ENCODE measurements at regions of chr2 and their contacts with region 1.

Region 1: GRCh38 chr2:178414266-178415247 is 36.4 kb downstream of the PRKRA start:
- DNase-seq: peak; percentile 93
- ATAC-seq: peak; percentile 83
- H3K4me3 ChIP-seq: peak overlapping the region; percentile 68 to 79
- H3K27ac ChIP-seq: peak overlapping the region; percentile 73; the same call in 1 of the 2 replicates
- H3K4me1 ChIP-seq: peaks cover 12 to 17% of the 10 kb centered on the region in 2 experiments; a peak in 3 of 4 replicates
- H3K27me3 ChIP-seq: no peaks in the 10 kb centered on the region
- CTCF ChIP-seq: peak; percentile 85 to 89 (median 89)
- POLR2A ChIP-seq: peak; percentile 65
- RAD21 ChIP-seq: peak; percentile 89

Region 2: DNA sequence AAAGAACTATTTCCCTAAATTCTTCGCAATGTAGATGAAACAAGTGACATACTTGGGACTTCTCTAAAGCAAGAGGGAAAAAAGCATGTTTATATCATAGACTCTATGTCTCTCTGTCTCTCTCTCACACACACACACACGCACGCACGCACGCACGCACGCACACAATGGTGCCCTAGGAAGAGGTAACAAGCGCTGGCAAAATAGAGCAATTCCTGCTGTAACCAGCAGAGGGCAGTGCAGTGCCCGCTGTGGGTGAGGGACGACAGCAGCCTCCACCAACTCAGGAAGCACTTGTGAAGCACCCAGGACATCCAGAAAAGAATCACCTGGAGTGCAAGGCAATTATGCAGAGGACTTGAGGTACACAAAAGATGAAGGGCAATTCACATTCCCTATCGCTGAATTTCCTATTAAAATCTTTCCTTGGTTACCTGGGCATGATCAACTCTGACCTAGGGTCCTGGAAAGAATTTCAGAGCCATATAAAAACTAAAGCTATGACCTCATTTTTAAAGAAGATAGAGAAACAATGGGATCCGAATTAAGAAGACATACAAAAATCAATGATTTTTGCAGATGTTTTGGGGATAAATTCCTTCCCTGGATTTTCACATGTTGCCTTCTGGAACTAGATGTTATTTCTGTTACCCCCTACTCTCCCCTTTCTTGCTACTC is 508.4 kb before region 1 on chr2:
- CTCF ChIA-PET with region 1: interaction called, 4 read pairs
- POLR2A ChIA-PET with region 1: no interaction called
- RAD21 ChIA-PET with region 1: no interaction called
- intact Hi-C with region 1: loop called (anchors 10 kb)
- DNase-seq: peak; percentile 63
- ATAC-seq: peak; percentile 99
- H3K4me3 ChIP-seq: no peak overlapping the region
- H3K27ac ChIP-seq: no peak overlapping the region
- H3K4me1 ChIP-seq: peaks cover 0 to 8% of the 10 kb centered on the region in 2 experiments; a peak in 2 of 4 replicates
- H3K27me3 ChIP-seq: no peaks in the 10 kb centered on the region
- CTCF ChIP-seq: peak; percentile 58 to 97 (median 97)
- POLR2A ChIP-seq: no peak
- RAD21 ChIP-seq: peak; percentile 58

Region 3: GRCh38 chr2:178112202-178113152 is 302.1 kb before region 1 on chr2 and contains the start of gene RBM45:
- CTCF ChIA-PET with region 1: interaction called, 25 read pairs
- POLR2A ChIA-PET with region 1: interaction called, 11 read pairs
- RAD21 ChIA-PET with region 1: no interaction called
- intact Hi-C with region 1: loop called (anchors 1 kb)
- DNase-seq: peak; percentile 87
- ATAC-seq: peak; percentile 97
- H3K4me3 ChIP-seq: peak within 1 kb of the TSS; percentile 77 to 97
- H3K27ac ChIP-seq: peak within 1 kb of the TSS; percentile 58
- H3K4me1 ChIP-seq: peaks cover 2 to 11% of the 10 kb centered on the region in 2 experiments; a peak in 1 of 4 replicates
- H3K27me3 ChIP-seq: no peaks in the 10 kb centered on the region
- CTCF ChIP-seq: peak; percentile 83 to 97 (median 93)
- POLR2A ChIP-seq: peak; percentile 79
- RAD21 ChIP-seq: peak; percentile 58
- total RNA-seq, gene RBM45: 7.4 TPM

Region 4: DNA sequence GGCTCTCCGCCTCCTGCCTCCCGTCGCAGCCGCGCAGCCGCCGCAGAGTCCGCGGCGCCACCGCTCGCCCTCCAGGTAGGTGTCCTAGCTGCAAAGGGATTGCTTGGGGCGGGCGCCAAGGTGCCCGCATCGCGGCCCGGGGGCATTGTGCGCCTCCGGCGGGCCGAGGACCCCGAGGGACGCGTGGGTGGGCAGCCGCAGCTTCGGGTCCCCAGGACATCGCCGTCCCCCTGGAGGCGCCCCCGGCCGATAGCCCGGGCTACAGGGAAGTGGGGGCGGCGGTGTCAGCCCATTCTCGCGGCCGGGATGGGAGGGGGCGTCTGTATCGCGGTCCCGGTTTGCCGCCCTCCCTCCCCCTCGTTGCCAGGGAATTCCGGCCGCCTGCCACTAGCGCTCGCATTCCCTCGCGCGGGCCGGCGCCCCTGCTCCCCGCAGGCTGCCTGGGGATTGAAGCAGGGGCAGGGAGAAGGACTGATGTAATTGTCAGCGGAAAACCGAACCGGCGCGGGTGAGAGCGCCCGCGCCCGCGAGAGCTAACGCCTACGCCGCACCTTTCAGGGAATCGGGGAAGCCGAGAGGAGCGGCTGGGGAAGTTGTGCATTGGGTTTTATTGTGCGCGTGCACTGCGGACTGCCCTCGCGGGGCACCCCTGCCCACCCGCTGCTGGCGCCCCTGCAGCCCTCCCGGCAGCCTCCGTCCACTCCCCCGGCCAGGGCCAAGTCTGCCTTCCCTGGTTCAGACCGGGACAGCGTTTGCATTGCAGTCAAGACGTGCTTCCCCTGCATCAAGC is 219.8 kb before region 1 on chr2:
- CTCF ChIA-PET with region 1: no interaction called
- POLR2A ChIA-PET with region 1: interaction called, 4 read pairs
- RAD21 ChIA-PET with region 1: no interaction called
- intact Hi-C with region 1: loop called (anchors 5 kb)
- DNase-seq: no peak
- ATAC-seq: peak; percentile 49
- H3K4me3 ChIP-seq: peak overlapping the region; percentile 69 to 87
- H3K27ac ChIP-seq: peak overlapping the region; percentile 79
- H3K4me1 ChIP-seq: peaks cover 11 to 28% of the 10 kb centered on the region in 2 experiments
- H3K27me3 ChIP-seq: no peaks in the 10 kb centered on the region
- CTCF ChIP-seq: 0 out of 6 replicates have a peak, but pooled peaks of 2 of the 3 experiments have one; percentile 1 to 12
- POLR2A ChIP-seq: no peak
- RAD21 ChIP-seq: no peak

Region 5: DNA sequence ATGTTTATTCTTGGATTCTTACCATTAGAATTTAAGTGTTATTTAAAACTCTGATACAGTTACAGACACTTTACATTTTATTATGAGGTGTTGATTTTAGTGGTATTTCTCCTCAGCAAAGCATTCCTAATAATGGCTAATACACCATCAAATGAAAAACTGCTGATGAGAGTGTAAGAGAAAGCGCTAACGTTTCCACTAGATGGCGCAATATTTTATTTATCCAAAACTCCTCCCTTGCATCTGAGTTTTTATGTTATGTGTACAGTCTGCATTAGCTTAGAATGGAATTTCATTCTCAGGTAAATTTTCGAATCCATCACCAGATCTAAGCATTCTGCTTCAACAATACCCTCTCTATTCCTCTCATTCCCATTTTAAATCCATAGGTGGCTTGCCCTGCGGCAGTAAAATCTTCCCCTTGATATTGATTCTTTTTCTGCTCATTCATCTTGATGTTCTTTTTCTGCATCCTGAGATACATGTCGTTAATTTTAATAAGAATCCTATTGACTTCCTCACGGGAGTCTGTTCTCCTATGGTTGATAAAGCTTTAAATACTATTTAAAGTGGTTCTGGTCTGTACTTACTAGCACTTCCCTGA is 17.5 kb before region 1 on chr2:
- CTCF ChIA-PET with region 1: interaction called, 22 read pairs
- POLR2A ChIA-PET with region 1: interaction called, 4 read pairs
- RAD21 ChIA-PET with region 1: interaction called in 1 of 2 experiments, 3 read pairs
- intact Hi-C with region 1: no loop called
- DNase-seq: peak; percentile 33
- ATAC-seq: peak; percentile 91
- H3K4me3 ChIP-seq: no peak overlapping the region
- H3K27ac ChIP-seq: no peak overlapping the region
- H3K4me1 ChIP-seq: no peaks in the 10 kb centered on the region
- H3K27me3 ChIP-seq: no peaks in the 10 kb centered on the region
- CTCF ChIP-seq: peak; percentile 54 to 77 (median 62); a peak in 5 of 6 replicates
- POLR2A ChIP-seq: no peak
- RAD21 ChIP-seq: peak; percentile 51

Measured in HCT116 (cell line).